ENCODE measurements at regions of chr20 and their contacts with region 1.

Region 1: GRCh38 chr20:10673988-10674711 is at the start of gene JAG1:
- DNase-seq: peak; percentile 99
- total RNA-seq, gene JAG1: 42.1 TPM

Region 2: GRCh38 chr20:10558635-10559187 is 115.4 kb before region 1 on chr20:
- intact Hi-C with region 1: loop called (anchors 5 kb)
- DNase-seq: no peak

Region 3: GRCh38 chr20:10636326-10636818 is 37.8 kb before region 1 on chr20:
- intact Hi-C with region 1: no loop called
- DNase-seq: no peak

Region 4: GRCh38 chr20:10739566-10739965 is 65.4 kb after region 1 on chr20:
- intact Hi-C with region 1: no loop called
- DNase-seq: no peak

Region 5: GRCh38 chr20:10857352-10858070 is 183.4 kb after region 1 on chr20:
- intact Hi-C with region 1: loop called (anchors 5 kb)
- DNase-seq: peak; percentile 76

Region 6: GRCh38 chr20:10982692-10983091 is 308.5 kb after region 1 on chr20:
- intact Hi-C with region 1: loop called (anchors 10 kb)
- DNase-seq: peak; percentile 83

Region 7: DNA sequence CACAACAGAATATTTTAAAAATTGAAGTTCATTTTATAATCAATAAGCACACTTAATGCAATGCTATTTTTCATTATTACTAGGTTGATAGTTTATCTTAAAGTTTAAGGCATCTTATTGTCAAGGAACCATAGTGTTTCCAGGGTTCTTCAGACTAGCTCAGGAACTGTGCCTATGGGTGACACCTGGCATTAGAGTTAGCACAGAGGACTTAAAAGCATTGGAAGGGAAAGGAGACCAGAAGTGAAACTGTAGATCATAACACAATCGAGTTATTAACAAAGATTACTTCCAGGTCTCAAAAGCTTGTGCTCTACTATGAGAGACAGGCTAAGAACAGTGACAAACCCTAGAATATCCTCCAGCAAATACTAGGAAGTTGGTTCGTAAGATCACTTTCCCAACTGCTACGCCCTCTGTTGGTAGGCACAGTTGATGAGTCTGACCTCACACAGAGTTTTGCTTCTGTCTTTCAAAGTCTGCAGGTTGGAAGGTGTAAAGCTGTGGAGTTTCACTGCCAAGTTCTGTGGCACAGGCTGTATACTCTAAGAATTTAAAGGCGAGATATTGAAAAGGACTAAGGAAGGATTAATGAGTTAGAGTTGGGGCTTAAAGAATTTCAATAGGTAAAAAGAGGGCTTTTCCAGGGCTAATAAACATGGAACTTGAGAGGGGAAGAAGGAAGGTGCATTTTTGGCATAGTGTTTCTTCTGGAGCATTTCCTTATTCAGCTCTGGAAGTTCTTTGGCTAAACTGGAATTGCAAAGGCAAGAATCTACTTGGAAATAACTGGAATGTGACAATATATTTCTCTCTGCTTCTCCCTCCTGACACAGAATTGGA is 531.0 kb after region 1 on chr20:
- intact Hi-C with region 1: loop called (anchors 1 kb)
- DNase-seq: no peak